ENCODE measurements at regions of chr6 and their contacts with region 1.

Region 1: DNA sequence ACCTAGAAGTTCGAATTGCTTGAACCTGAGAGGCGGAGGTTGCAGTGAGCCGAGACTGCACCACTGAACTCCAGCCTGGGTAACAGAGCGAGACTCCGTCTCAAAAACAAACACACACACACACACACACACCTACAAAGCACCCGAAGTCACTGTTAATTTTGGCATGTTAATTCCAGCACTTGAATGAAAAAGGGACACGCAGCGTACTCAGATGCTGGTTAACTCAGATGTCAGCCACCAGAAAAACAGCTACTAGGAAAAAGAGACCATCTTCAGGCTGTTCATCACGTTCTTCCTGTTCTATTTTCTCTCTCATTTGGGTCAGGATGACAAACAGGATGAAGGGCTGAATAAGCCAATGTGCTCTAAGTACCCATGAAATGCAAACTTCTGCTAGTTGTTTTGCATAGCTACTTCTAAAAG is 46.9 kb downstream of the BLOC1S5 start:
- DNase-seq: no peak
- ATAC-seq: no peak
- H3K4me3 ChIP-seq: no peak overlapping the region
- H3K27ac ChIP-seq: no peak overlapping the region
- H3K4me1 ChIP-seq: 0 out of 2 replicates have a peak, but pooled peaks cover 7% of the 10 kb centered on the region
- H3K27me3 ChIP-seq: no peaks in the 10 kb centered on the region
- CTCF ChIP-seq: no peak

Region 2: GRCh38 chr6:8219352-8219943 is 202.2 kb after region 1 on chr6:
- CTCF ChIA-PET with region 1: no interaction called
- POLR2A ChIA-PET with region 1: no interaction called
- intact Hi-C with region 1: loop called (anchors 10 kb)
- DNase-seq: peak; percentile 69
- ATAC-seq: peak; percentile 78
- H3K4me3 ChIP-seq: peak overlapping the region; percentile 37; the same call in 1 of the 2 replicates
- H3K27ac ChIP-seq: no peak overlapping the region
- H3K4me1 ChIP-seq: no peaks in the 10 kb centered on the region
- H3K27me3 ChIP-seq: peaks cover 31% of the 10 kb centered on the region
- CTCF ChIP-seq: peak; percentile 81